A673 (cell line): ENCODE measurements at regions of chr4 and their contacts with region 1.

Region 1: DNA sequence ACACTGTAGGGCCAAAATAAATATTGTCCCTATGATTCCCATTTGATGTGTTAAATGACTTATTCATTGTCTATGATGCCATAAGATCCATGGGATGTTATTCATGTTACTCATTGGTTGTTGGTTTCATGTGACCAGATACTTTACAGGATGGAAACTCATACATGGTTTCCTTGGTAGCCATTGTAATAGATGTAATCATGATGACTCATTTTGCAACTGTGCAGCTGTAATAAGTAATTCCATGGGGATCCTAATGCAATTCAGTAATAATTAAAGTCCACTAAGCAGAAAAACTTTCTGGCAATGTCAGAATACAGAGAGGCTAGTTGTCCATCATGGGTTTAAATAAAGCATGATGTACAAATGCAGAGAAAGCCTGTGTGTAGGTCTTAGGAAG is 389.7 kb upstream of the NR3C2 start:
- DNase-seq: peak; percentile 72
- H3K4me3 ChIP-seq: no peak overlapping the region
- H3K27ac ChIP-seq: no peak overlapping the region
- H3K4me1 ChIP-seq: peaks cover 5% of the 10 kb centered on the region
- H3K27me3 ChIP-seq: no peaks in the 10 kb centered on the region
- CTCF ChIP-seq: no peak

Region 2: DNA sequence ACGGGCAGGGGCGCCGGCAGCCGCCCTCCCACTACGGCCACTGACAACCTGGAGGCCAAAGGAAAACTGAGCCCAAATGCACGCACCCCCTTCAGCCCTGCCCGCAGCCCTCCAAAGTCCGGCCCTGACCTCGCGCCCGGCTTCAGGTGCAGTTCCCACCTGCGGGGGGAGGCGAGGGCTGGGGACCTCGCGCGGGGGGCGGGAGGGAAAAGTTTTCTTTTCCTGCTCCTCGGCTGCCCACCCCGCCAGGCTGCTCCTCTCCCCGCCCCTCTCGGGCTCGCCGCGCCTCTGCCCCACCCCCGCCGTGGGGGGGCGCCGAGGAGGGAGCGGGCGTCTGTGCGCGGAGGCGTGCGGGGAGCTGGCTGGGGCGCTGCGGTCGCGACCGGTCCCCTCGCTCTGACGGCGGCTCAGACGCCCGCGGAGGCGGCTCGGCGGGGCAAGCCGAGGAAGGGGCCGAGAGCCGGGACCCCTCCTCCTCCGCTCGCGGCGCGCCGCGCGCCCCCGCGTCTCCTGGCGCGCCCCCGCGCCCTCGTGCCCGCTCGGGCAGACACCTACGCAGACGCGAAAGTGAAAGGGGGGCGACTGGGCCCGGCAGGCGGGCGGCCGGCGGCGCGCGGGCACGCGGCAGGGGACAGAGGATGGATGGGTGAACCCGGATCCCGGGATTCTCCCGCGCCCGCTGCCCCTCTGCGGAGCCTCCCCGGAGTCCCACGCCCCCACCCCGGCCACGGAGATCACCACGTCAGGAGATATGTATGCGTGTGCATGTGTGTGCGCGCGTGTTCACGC is 386.7 kb before region 1 on chr4:
- CTCF ChIA-PET with region 1: no interaction called
- POLR2A ChIA-PET with region 1: no interaction called
- intact Hi-C with region 1: no loop called
- DNase-seq: peak; percentile 55
- H3K4me3 ChIP-seq: peak overlapping the region; percentile 72
- H3K27ac ChIP-seq: no peak overlapping the region
- H3K4me1 ChIP-seq: peaks cover 22% of the 10 kb centered on the region
- H3K27me3 ChIP-seq: peaks cover 19% of the 10 kb centered on the region
- CTCF ChIP-seq: no peak

Region 3: GRCh38 chr4:148716431-148717052 is 115.4 kb before region 1 on chr4:
- CTCF ChIA-PET with region 1: no interaction called
- POLR2A ChIA-PET with region 1: interaction called, 20 read pairs
- intact Hi-C with region 1: no loop called
- DNase-seq: no peak
- H3K4me3 ChIP-seq: no peak overlapping the region
- H3K27ac ChIP-seq: no peak overlapping the region
- H3K4me1 ChIP-seq: no peaks in the 10 kb centered on the region
- H3K27me3 ChIP-seq: no peaks in the 10 kb centered on the region
- CTCF ChIP-seq: no peak

Region 4: GRCh38 chr4:148787831-148788477 is 44.0 kb before region 1 on chr4:
- CTCF ChIA-PET with region 1: no interaction called
- POLR2A ChIA-PET with region 1: no interaction called
- intact Hi-C with region 1: loop called (anchors 1 kb)
- DNase-seq: no peak
- H3K4me3 ChIP-seq: no peak overlapping the region
- H3K27ac ChIP-seq: no peak overlapping the region
- H3K4me1 ChIP-seq: peaks cover 8% of the 10 kb centered on the region
- H3K27me3 ChIP-seq: no peaks in the 10 kb centered on the region
- CTCF ChIP-seq: no peak

Region 5: DNA sequence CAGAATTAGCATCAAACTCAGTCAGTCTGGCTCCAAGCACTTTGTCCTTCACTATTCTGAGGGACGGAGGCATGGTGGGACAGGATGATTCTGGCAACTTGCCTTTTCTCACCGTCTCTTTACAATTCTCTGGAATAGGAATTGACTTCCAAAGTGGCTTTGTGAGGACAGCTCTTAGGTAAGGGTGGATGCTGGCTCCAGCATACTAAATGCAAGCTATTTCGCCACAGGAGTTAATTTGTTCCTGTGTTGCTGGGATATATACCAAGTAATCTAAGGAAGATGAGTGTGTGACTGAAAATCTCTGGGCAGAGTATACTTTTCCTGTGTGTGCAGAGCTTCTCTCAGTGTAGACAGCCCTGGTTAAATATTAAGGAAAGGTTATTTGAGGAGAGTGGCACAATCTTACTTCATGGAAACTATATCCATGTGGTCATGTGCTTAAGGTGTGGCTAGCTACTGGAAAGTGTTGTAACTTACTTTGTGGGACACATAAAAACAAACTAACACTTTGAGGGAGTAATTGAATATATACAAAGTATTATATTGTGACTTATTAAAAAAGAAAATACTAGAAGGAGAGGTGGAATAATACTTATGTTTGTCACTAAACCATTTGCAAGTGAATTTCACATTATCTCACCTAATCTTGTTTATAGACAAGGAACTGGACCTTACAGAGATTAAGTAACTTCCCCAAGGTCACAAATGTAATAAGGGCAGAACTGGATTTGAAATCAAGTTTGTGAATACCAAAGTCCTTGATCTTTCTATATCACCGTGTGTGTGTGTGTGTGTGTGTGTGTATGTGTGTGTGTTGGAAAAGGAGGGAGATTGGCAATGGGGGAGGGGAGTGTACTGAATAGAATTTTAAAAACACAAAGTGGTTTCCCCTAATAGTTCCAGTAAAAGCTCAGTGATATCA is 18.4 kb after region 1 on chr4:
- CTCF ChIA-PET with region 1: no interaction called
- POLR2A ChIA-PET with region 1: no interaction called
- intact Hi-C with region 1: no loop called
- DNase-seq: no peak
- H3K4me3 ChIP-seq: no peak overlapping the region
- H3K27ac ChIP-seq: no peak overlapping the region
- H3K4me1 ChIP-seq: peaks cover 7% of the 10 kb centered on the region
- H3K27me3 ChIP-seq: no peaks in the 10 kb centered on the region
- CTCF ChIP-seq: no peak

Region 6: GRCh38 chr4:148980782-148981480 is 149.0 kb after region 1 on chr4:
- CTCF ChIA-PET with region 1: no interaction called
- POLR2A ChIA-PET with region 1: no interaction called
- intact Hi-C with region 1: no loop called
- DNase-seq: no peak
- H3K4me3 ChIP-seq: no peak overlapping the region
- H3K27ac ChIP-seq: no peak overlapping the region
- H3K4me1 ChIP-seq: no peaks in the 10 kb centered on the region
- H3K27me3 ChIP-seq: no peaks in the 10 kb centered on the region
- CTCF ChIP-seq: no peak

Region 7: GRCh38 chr4:150305995-150306394 is 1474.0 kb after region 1 on chr4:
- CTCF ChIA-PET with region 1: no interaction called
- POLR2A ChIA-PET with region 1: no interaction called
- intact Hi-C with region 1: no loop called
- DNase-seq: peak; percentile 75
- H3K4me3 ChIP-seq: no peak overlapping the region
- H3K27ac ChIP-seq: peak overlapping the region; percentile 68
- H3K4me1 ChIP-seq: peaks cover 52% of the 10 kb centered on the region
- H3K27me3 ChIP-seq: no peaks in the 10 kb centered on the region
- CTCF ChIP-seq: no peak